Breast epithelium (tissue), 4 donors: ENCODE measurements at regions of chr19 and their contacts with region 1.

Region 1: DNA sequence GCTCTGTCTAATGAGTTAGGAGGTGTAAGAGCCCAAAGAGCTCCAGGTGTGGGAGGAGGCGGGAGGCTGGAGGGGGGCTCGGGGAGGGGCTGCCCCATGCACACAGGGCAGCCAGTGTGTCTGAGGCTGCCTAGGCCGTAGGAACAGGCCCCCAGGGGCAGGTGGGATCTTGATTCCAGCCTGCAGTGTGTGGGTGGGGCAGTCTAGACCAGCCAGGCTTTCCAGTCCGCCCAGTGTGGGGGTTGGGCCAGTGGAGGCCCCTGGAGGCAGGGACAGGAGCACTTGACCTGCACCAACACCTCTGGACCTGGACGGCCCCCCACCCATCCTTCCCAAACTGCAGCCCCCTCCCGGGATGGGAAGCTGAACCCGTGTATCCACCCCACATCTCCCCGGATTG is 5.4 kb upstream of the CAMSAP3 start:
- DNase-seq: peak; percentile 47 to 84
- H3K4me3 ChIP-seq: no peak overlapping the region
- H3K27ac ChIP-seq: peak overlapping the region; percentile 38 to 55
- H3K4me1 ChIP-seq: no peaks in the 10 kb centered on the region
- H3K27me3 ChIP-seq: no peaks in the 10 kb centered on the region
- CTCF ChIP-seq: no peak
- POLR2A ChIP-seq: no peak

Region 2: GRCh38 chr19:6287269-6287885 is 1302.9 kb before region 1 on chr19:
- intact Hi-C with region 1: no loop called
- DNase-seq: no peak
- H3K4me3 ChIP-seq: no peak overlapping the region
- H3K27ac ChIP-seq: no peak overlapping the region
- H3K4me1 ChIP-seq: no peaks in the 10 kb centered on the region
- H3K27me3 ChIP-seq: no peaks in the 10 kb centered on the region
- CTCF ChIP-seq: no peak
- POLR2A ChIP-seq: no peak

Region 3: DNA sequence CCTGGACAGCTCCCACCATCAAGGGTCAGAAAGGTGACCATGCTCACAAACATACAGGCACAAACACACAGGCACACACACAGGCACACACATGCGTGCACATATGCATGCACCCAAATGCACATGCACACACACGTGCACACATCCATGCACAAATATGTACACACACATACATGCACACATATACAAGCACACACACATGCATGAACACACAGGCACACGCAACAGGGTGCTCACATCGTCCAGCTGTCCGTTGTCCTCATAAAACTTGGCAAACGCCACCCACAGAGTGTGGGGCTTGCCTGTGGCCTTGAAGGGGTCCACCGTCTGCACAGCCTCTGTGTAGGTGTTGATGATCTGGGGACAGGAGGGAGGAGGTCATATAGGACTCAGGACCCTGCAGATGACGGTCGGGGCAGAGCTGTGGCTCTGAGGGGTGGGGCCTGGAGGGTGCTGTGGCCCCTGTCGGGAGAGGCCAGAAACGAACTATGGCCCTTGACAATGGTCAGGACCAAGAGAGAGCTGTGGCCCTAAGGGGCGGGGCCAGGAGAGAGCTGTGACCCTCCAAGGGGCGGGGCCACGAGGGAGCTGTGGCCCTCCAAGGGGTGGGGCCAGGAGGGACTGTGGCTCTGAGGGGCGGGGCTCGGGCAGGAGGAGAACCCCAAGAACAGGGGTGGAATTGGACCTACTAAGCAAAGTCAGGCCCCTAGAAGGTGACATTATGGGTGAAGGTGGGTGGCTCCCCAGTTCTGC is 32.8 kb after region 1 on chr19:
- intact Hi-C with region 1: loop called (anchors 1 kb)
- DNase-seq: no peak
- H3K4me3 ChIP-seq: no peak overlapping the region
- H3K27ac ChIP-seq: no peak overlapping the region
- H3K4me1 ChIP-seq: peaks cover 0 to 18% of the 10 kb centered on the region in 2 donors
- H3K27me3 ChIP-seq: no peaks in the 10 kb centered on the region
- CTCF ChIP-seq: no peak
- POLR2A ChIP-seq: no peak

Region 4: GRCh38 chr19:7658219-7658686 is 68.0 kb after region 1 on chr19:
- intact Hi-C with region 1: no loop called
- DNase-seq: no peak
- H3K4me3 ChIP-seq: no peak overlapping the region
- H3K27ac ChIP-seq: no peak overlapping the region
- H3K4me1 ChIP-seq: no peaks in the 10 kb centered on the region
- H3K27me3 ChIP-seq: no peaks in the 10 kb centered on the region
- CTCF ChIP-seq: no peak
- POLR2A ChIP-seq: no peak